ENCODE measurements at regions of chr5 and their contacts with region 1.

Region 1: GRCh38 chr5:96336351-96336985 is 96.6 kb downstream of the PCSK1 start:
- DNase-seq: peak; percentile 38
- H3K4me3 Mint-ChIP-seq: no peak overlapping the region
- H3K27ac Mint-ChIP-seq: no peak overlapping the region
- H3K4me1 Mint-ChIP-seq: peaks cover 14% of the 10 kb centered on the region
- H3K27me3 Mint-ChIP-seq: peaks cover 21% of the 10 kb centered on the region

Region 2: GRCh38 chr5:96079075-96079474 is 257.4 kb before region 1 on chr5:
- intact Hi-C with region 1: loop called (anchors 2 kb)
- DNase-seq: no peak
- H3K4me3 Mint-ChIP-seq: no peak overlapping the region
- H3K27ac Mint-ChIP-seq: peak overlapping the region; percentile 76
- H3K4me1 Mint-ChIP-seq: peaks cover 64% of the 10 kb centered on the region
- H3K27me3 Mint-ChIP-seq: no peaks in the 10 kb centered on the region

Region 3: GRCh38 chr5:96226941-96227552 is 109.4 kb before region 1 on chr5:
- intact Hi-C with region 1: loop called (anchors 10 kb)
- DNase-seq: no peak
- H3K4me3 Mint-ChIP-seq: no peak overlapping the region
- H3K27ac Mint-ChIP-seq: no peak overlapping the region
- H3K4me1 Mint-ChIP-seq: peaks cover 3% of the 10 kb centered on the region
- H3K27me3 Mint-ChIP-seq: peaks cover 4% of the 10 kb centered on the region

Region 4: DNA sequence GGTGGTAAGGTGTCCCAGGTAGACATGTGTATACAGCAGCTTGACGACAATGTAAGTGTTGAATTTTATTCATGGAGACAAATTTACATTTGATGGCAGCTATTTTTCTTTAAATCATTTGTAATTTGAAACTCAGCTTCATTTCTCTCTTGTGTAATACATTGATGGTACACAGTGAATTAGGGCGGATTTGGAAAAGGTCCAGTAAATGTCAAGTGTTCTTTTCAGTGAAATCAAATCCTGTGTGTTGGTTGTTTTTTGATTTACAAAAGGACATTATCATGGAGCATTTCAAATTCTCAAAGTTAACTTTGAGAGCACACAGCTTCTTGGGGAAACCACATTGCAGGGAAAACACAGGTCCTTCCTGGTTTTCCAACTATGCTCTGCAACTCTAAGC is 126.6 kb after region 1 on chr5:
- intact Hi-C with region 1: no loop called
- DNase-seq: no peak
- H3K4me3 Mint-ChIP-seq: no peak overlapping the region
- H3K27ac Mint-ChIP-seq: no peak overlapping the region
- H3K4me1 Mint-ChIP-seq: no peaks in the 10 kb centered on the region
- H3K27me3 Mint-ChIP-seq: peaks cover 33% of the 10 kb centered on the region

Measured in activated T-helper 2 cell treated with anti-CD3 and anti-CD28 coated beads, Interferon-gamma antibody, Interleukin-2, Interleukin-4, amounts not matched to agents 10 μg/mL and 5 μg/mL and 100 μg/mL, durations not matched to agents 14 hours and 24 hours and 36 hours (primary cell).